IMR-90 (cell line): ENCODE measurements at regions of chr2 and their contacts with region 1.

Region 1: DNA sequence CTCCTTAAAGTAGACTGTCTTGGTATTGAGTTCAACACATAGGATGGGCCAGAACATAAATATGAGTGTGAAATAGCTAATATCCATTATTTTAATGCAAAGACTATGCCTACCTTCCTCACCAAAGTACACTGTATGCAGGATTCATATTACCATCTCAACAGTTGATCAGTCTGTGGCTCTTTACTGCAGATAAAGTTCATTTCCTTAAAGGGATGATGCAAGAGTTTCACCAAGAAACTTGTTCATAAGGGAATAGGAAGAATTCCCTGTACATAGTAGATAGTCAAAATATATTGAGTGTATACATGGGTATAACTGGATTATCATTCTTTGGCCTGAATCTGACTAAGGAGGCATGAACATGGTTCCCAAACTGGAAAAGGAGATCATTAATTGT is 35.0 kb downstream of the MARS2 start:
- DNase-seq: no peak
- ATAC-seq: no peak
- H3K4me3 ChIP-seq: no peak overlapping the region
- H3K27ac ChIP-seq: no peak overlapping the region
- H3K4me1 ChIP-seq: no peaks in the 10 kb centered on the region
- H3K27me3 ChIP-seq: no peaks in the 10 kb centered on the region
- CTCF ChIP-seq: no peak
- POLR2A ChIP-seq: no peak
- RAD21 ChIP-seq: no peak

Region 2: DNA sequence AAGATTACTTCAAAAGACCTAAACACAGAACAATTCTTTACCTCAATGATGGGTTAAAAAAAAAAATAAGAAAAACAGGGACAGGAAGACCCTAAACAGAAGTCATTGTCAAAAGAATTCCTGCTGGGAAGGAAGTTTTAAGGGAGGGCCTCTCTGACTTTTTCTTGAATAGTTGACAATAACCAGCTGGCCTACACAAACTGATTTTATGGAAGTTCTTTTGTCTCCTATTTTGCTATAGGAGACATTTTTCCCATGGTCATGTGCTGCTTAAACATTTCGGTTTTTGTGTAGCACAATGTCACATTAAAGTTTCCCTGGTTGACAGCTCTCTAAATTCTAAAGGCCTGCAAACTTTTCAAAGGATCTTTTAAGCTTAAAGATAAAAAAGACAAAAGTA is 120.1 kb before region 1 on chr2:
- CTCF ChIA-PET with region 1: no interaction called
- POLR2A ChIA-PET with region 1: no interaction called
- dilution Hi-C with region 1: no loop called
- in situ Hi-C with region 1: no loop called
- intact Hi-C with region 1: no loop called
- DNase-seq: no peak
- ATAC-seq: no peak
- H3K4me3 ChIP-seq: no peak overlapping the region
- H3K27ac ChIP-seq: no peak overlapping the region
- H3K4me1 ChIP-seq: no peaks in the 10 kb centered on the region
- H3K27me3 ChIP-seq: no peaks in the 10 kb centered on the region
- CTCF ChIP-seq: no peak
- POLR2A ChIP-seq: no peak
- RAD21 ChIP-seq: no peak

Region 3: DNA sequence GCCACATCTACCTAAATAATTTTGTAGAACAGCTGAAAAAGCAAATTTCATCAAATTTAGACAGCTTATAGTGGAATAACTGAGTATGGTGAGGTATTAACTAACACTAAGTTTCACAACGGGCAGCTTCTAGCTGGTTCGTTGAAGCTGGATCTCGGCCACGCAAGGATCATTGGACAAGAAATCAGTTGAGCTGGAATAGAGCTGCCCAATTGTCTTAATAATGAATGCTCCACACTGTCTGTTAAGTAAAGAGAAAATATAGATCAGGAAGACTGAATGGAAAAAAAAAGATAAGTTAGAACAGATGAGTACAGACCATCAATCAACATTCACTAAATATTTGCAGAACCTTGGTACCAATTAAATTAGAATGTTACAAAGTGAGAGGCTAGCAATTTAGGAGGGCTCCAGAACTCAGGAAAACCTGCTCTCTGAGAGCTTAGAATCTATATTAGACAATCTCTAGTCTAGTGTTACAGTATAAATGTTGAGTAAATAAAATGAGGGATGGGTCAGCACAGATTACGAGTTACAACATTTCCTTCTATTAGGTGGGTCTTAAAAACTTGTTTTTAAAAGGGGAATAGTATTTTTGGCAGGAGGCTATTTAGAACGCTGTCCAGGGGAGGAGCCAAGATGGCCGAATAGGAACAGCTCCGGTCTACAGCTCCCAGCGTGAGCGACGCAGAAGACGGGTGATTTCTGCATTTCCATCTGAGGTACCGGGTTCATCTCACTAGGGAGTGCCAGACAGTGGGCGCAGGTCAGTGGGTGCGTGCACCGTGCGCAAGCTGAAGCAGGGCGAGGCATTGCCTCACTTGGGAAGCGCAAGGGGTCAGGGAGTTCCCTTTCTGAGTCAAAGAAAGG is 11.6 kb before region 1 on chr2:
- CTCF ChIA-PET with region 1: no interaction called
- POLR2A ChIA-PET with region 1: no interaction called
- dilution Hi-C with region 1: no loop called
- in situ Hi-C with region 1: no loop called
- intact Hi-C with region 1: loop called (anchors 1 kb)
- DNase-seq: no peak
- ATAC-seq: no peak
- H3K4me3 ChIP-seq: no peak overlapping the region
- H3K27ac ChIP-seq: no peak overlapping the region
- H3K4me1 ChIP-seq: no peaks in the 10 kb centered on the region
- H3K27me3 ChIP-seq: no peaks in the 10 kb centered on the region
- CTCF ChIP-seq: no peak
- POLR2A ChIP-seq: no peak
- RAD21 ChIP-seq: no peak